T-cell (primary cell): ENCODE measurements at regions of chr6 and their contacts with region 1.

Region 1: GRCh38 chr6:111764238-111765175 is 108.7 kb downstream of the FYN start:
- DNase-seq: peak in 31 of 35 experiments; percentile 22 to 83 (median 48)
- ATAC-seq: peak in 3 of 4 experiments; percentile 16 to 32 (median 23)
- H3K4me3 ChIP-seq: peak overlapping the region in 1 of 2 donors; percentile 40
- H3K4me3 Mint-ChIP-seq: peak overlapping the region; percentile 59 to 95 (median 65)
- H3K27ac ChIP-seq: peak overlapping the region; percentile 98
- H3K27ac Mint-ChIP-seq: peak overlapping the region; percentile 97 to 99
- H3K4me1 ChIP-seq: peaks cover 88 to 91% of the 10 kb centered on the region in 2 experiments
- H3K4me1 Mint-ChIP-seq: peaks cover 98 to 100% (median 100%) of the 10 kb centered on the region in 3 donors
- H3K27me3 ChIP-seq: no peaks in the 10 kb centered on the region
- H3K27me3 Mint-ChIP-seq: no peaks in the 10 kb centered on the region

Region 2: DNA sequence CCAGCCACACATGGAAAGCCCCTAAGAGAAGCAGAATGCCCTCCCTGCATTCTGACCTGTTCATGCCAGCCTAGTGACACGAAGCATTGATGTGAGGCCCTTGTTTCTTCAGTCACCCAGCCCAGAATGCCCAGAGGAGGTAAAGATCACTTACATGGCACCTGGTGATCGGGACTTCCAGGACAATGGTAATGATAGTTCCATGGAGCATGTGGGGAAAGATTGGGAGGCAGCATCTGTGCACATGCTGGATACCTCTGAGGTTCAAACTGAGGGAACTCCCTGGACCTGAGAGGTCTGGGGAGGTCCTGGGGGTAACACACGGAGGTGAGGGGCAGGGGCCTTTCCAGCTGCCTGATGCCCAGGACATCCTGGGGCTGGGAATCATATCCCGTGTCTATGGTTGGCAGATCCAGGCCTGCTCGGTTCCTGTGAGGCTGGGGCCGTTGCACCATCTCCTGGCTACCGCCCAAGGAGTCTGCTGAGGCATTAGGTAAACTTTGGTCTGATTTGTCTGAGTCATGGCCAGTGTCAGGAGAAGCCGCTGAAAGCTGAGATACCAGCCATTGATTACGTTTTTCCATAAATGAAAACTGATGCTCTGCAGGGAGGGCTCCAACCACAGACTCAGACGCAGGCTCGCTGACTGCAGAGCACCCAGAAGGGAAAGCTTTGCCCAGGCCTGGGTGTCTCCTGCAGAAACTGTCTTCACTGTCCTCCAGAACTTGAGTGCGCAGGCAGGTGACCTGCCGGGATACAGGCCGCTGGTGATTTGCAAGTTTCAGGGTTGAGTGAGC is 173.2 kb before region 1 on chr6:
- CTCF ChIA-PET with region 1: no interaction called
- POLR2A ChIA-PET with region 1: no interaction called
- DNase-seq: no peak
- ATAC-seq: no peak
- H3K4me3 ChIP-seq: no peak overlapping the region
- H3K4me3 Mint-ChIP-seq: no peak overlapping the region
- H3K27ac ChIP-seq: no peak overlapping the region
- H3K27ac Mint-ChIP-seq: no peak overlapping the region
- H3K4me1 ChIP-seq: peaks cover 6% of the 10 kb centered on the region in 2 experiments
- H3K4me1 Mint-ChIP-seq: peaks cover 34 to 52% (median 36%) of the 10 kb centered on the region in 3 donors
- H3K27me3 ChIP-seq: no peaks in the 10 kb centered on the region
- H3K27me3 Mint-ChIP-seq: no peaks in the 10 kb centered on the region

Region 3: GRCh38 chr6:111734068-111735061 is 30.1 kb before region 1 on chr6:
- CTCF ChIA-PET with region 1: interaction called in 1 of 2 experiments, 4 read pairs
- POLR2A ChIA-PET with region 1: interaction called in 1 of 2 experiments, 10 read pairs
- DNase-seq: peak in 2 of 35 experiments; percentile 34 to 49
- ATAC-seq: peak in 1 of 4 experiments; percentile 68
- H3K4me3 ChIP-seq: no peak overlapping the region
- H3K4me3 Mint-ChIP-seq: peak overlapping the region in 1 of 3 donors; percentile 29
- H3K27ac ChIP-seq: peak overlapping the region; percentile 56
- H3K27ac Mint-ChIP-seq: peak overlapping the region; percentile 90 to 96
- H3K4me1 ChIP-seq: peaks cover 40 to 89% of the 10 kb centered on the region in 2 experiments
- H3K4me1 Mint-ChIP-seq: peaks cover 77 to 100% (median 92%) of the 10 kb centered on the region in 3 donors
- H3K27me3 ChIP-seq: no peaks in the 10 kb centered on the region
- H3K27me3 Mint-ChIP-seq: no peaks in the 10 kb centered on the region

Region 4: GRCh38 chr6:111750753-111751684 is 13.5 kb before region 1 on chr6:
- CTCF ChIA-PET with region 1: interaction called, 4 to 19 read pairs
- POLR2A ChIA-PET with region 1: interaction called, 15 to 24 read pairs
- DNase-seq: peak in 33 of 35 experiments; percentile 46 to 89 (median 68)
- ATAC-seq: peak; percentile 91 to 98 (median 93)
- H3K4me3 ChIP-seq: no peak overlapping the region
- H3K4me3 Mint-ChIP-seq: peak overlapping the region; percentile 41 to 66 (median 65)
- H3K27ac ChIP-seq: peak overlapping the region; percentile 98
- H3K27ac Mint-ChIP-seq: peak overlapping the region; percentile 97 to 99
- H3K4me1 ChIP-seq: peaks cover 67 to 93% of the 10 kb centered on the region in 2 experiments
- H3K4me1 Mint-ChIP-seq: peaks cover 96 to 99% (median 98%) of the 10 kb centered on the region in 3 donors
- H3K27me3 ChIP-seq: no peaks in the 10 kb centered on the region
- H3K27me3 Mint-ChIP-seq: no peaks in the 10 kb centered on the region

Region 5: GRCh38 chr6:111777357-111777756 is 12.8 kb after region 1 on chr6:
- CTCF ChIA-PET with region 1: interaction called in 1 of 2 experiments, 20 read pairs
- POLR2A ChIA-PET with region 1: interaction called, 3 to 9 read pairs
- DNase-seq: peak in 15 of 35 experiments; percentile 12 to 73 (median 35)
- ATAC-seq: peak; percentile 35 to 60 (median 57)
- H3K4me3 ChIP-seq: no peak overlapping the region
- H3K4me3 Mint-ChIP-seq: peak overlapping the region; percentile 6 to 39 (median 34)
- H3K27ac ChIP-seq: peak overlapping the region; percentile 73
- H3K27ac Mint-ChIP-seq: peak overlapping the region; percentile 87 to 88
- H3K4me1 ChIP-seq: peaks cover 40 to 82% of the 10 kb centered on the region in 2 experiments
- H3K4me1 Mint-ChIP-seq: peaks cover 88 to 93% (median 90%) of the 10 kb centered on the region in 3 donors
- H3K27me3 ChIP-seq: no peaks in the 10 kb centered on the region
- H3K27me3 Mint-ChIP-seq: no peaks in the 10 kb centered on the region

Region 6: GRCh38 chr6:111788379-111789276 is 24.1 kb after region 1 on chr6:
- CTCF ChIA-PET with region 1: interaction called, 3 to 5 read pairs
- POLR2A ChIA-PET with region 1: interaction called in 1 of 2 experiments, 10 read pairs
- DNase-seq: no peak
- ATAC-seq: peak in 1 of 4 experiments; percentile 21
- H3K4me3 ChIP-seq: no peak overlapping the region
- H3K4me3 Mint-ChIP-seq: no peak overlapping the region
- H3K27ac ChIP-seq: peak overlapping the region; percentile 7
- H3K27ac Mint-ChIP-seq: no peak overlapping the region
- H3K4me1 ChIP-seq: peaks cover 6 to 48% of the 10 kb centered on the region in 2 experiments
- H3K4me1 Mint-ChIP-seq: peaks cover 27 to 59% (median 54%) of the 10 kb centered on the region in 3 donors
- H3K27me3 ChIP-seq: no peaks in the 10 kb centered on the region
- H3K27me3 Mint-ChIP-seq: no peaks in the 10 kb centered on the region

Region 7: GRCh38 chr6:112522587-112522986 is 758.1 kb after region 1 on chr6:
- CTCF ChIA-PET with region 1: no interaction called
- POLR2A ChIA-PET with region 1: no interaction called
- DNase-seq: no peak
- ATAC-seq: no peak
- H3K4me3 ChIP-seq: no peak overlapping the region
- H3K4me3 Mint-ChIP-seq: no peak overlapping the region
- H3K27ac ChIP-seq: no peak overlapping the region
- H3K27ac Mint-ChIP-seq: no peak overlapping the region
- H3K4me1 ChIP-seq: no peaks in the 10 kb centered on the region
- H3K4me1 Mint-ChIP-seq: no peaks in the 10 kb centered on the region
- H3K27me3 ChIP-seq: no peaks in the 10 kb centered on the region
- H3K27me3 Mint-ChIP-seq: no peaks in the 10 kb centered on the region